ENCODE measurements at regions of chr10 and their contacts with region 1.

Region 1: DNA sequence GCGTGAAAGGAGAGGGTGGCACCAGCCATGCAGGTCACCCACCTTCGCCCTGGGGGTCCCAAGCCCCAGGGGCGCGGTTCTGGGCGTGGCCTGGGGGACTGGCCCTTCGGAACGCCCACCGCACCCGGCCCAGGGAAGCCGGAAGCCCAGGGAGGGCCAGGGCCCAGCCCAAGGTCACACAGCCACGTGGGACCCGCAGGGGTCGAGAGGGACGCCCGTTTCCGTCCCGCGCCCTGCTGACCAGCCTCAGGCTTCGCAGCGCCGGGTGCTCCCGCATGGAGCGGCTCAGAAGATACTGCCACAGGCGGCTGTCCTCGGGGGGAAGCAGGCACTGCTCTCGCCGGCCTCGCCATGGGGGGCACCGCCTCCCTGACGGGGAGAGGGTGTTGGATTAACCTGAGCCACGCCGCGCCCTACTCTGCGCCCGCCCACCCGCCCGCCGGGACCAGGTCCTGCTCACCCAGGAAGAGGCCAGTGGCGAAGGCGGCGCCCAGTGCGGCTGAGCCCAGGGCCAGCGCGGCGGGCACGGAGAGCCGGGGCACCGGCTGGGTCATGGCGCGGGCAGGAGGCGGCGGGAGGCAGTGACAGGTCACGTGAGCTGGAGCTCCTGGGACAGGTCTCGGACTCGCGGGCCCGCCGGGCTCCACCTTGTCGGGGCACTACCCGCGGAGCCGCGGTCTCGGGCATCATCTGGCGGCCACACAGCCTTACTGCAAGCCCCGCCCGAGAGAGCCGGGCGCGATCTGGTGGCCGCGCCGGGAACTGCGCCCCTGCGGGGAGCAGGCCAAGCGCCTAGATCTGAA is at the start of gene COMTD1:
- DNase-seq: peak; percentile 100
- ATAC-seq: peak; percentile 59
- H3K4me3 ChIP-seq: peak within 1 kb of the TSS; percentile 72
- H3K27ac ChIP-seq: peak within 1 kb of the TSS; percentile 71
- H3K4me1 ChIP-seq: peaks cover 42% of the 10 kb centered on the region
- H3K27me3 ChIP-seq: no peaks in the 10 kb centered on the region
- CTCF ChIP-seq: peak; percentile 100
- total RNA-seq, gene COMTD1: 183 and 214 TPM in 2 replicates

Region 2: GRCh38 chr10:74244097-74244685 is 991.4 kb before region 1 on chr10:
- CTCF ChIA-PET with region 1: interaction called, 6 read pairs
- POLR2A ChIA-PET with region 1: no interaction called
- intact Hi-C with region 1: loop called (anchors 1 kb)
- DNase-seq: peak; percentile 99
- ATAC-seq: peak; percentile 20; the same call in 1 of the 2 replicates
- H3K4me3 ChIP-seq: no peak overlapping the region
- H3K27ac ChIP-seq: no peak overlapping the region
- H3K4me1 ChIP-seq: no peaks in the 10 kb centered on the region
- H3K27me3 ChIP-seq: no peaks in the 10 kb centered on the region
- CTCF ChIP-seq: peak; percentile 100

Region 3: GRCh38 chr10:75187961-75188426 is 47.6 kb before region 1 on chr10:
- CTCF ChIA-PET with region 1: interaction called, 170 read pairs
- POLR2A ChIA-PET with region 1: interaction called, 14 read pairs
- intact Hi-C with region 1: loop called (anchors 1 kb)
- DNase-seq: peak; percentile 99
- ATAC-seq: peak; percentile 64
- H3K4me3 ChIP-seq: no peak overlapping the region
- H3K27ac ChIP-seq: peak overlapping the region; percentile 6
- H3K4me1 ChIP-seq: peaks cover 31% of the 10 kb centered on the region
- H3K27me3 ChIP-seq: no peaks in the 10 kb centered on the region
- CTCF ChIP-seq: peak; percentile 98

Region 4: GRCh38 chr10:75210282-75211006 is 25.1 kb before region 1 on chr10 and contains the start of gene VDAC2:
- CTCF ChIA-PET with region 1: interaction called, 21 read pairs
- POLR2A ChIA-PET with region 1: interaction called, 8 read pairs
- intact Hi-C with region 1: loop called (anchors 1 kb)
- DNase-seq: peak; percentile 99
- ATAC-seq: peak; percentile 88
- H3K4me3 ChIP-seq: peak within 1 kb of the TSS; percentile 72
- H3K27ac ChIP-seq: peak within 1 kb of the TSS; percentile 85
- H3K4me1 ChIP-seq: peaks cover 45% of the 10 kb centered on the region
- H3K27me3 ChIP-seq: no peaks in the 10 kb centered on the region
- CTCF ChIP-seq: no peak
- total RNA-seq, gene VDAC2: 463 and 542 TPM in 2 replicates

Region 5: GRCh38 chr10:75350791-75351190 is 115.2 kb after region 1 on chr10:
- CTCF ChIA-PET with region 1: no interaction called
- POLR2A ChIA-PET with region 1: no interaction called
- intact Hi-C with region 1: no loop called
- DNase-seq: peak; percentile 91
- ATAC-seq: peak; percentile 86
- H3K4me3 ChIP-seq: no peak overlapping the region
- H3K27ac ChIP-seq: no peak overlapping the region
- H3K4me1 ChIP-seq: no peaks in the 10 kb centered on the region
- H3K27me3 ChIP-seq: 0 out of 2 replicates have a peak, but pooled peaks cover 10% of the 10 kb centered on the region
- CTCF ChIP-seq: peak; percentile 38; the same call in 1 of the 2 replicates

Region 6: DNA sequence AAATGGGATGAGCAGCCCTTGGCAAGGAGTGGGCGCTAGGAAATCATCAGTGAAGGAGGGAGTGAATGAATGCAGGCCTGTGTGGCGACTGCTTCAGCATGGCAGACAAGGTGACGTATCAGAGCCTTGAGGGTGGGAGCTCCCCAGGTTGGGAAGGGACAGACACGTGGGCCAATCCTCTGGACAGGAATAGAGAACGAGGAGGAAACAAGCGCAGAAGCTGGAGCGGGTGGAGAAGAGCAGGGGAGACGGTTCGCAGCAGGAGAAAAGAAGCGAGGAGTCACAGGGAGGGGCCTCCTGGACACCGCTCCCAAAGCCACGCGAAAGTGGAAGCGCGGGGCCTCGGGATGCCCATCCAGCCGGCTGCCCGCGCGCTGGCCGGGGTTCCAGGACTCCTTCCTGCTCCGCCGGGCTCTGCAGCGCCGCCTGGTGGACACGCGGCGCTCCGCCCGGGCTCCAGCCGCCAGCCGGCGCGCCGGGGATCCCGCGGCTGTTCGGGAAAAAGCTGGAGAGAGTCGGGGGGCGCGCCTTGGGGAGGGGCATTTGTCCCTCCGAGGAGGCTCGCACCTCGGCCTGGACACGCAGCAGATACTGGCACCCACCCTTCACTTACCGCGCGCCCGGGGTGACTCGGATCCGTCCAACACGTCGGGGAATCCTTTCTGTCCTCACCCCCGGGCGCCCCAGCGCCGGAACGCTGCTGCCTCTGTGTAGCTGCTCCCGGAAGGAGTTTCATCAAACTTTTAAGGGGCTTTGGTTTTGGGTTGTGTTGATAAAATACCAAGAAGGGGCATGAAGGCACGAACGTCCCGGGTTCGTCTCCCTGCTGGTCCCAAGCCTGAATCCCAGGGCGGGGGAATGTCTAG is 159.7 kb after region 1 on chr10:
- CTCF ChIA-PET with region 1: interaction called, 5 read pairs
- POLR2A ChIA-PET with region 1: interaction called, 3 read pairs
- intact Hi-C with region 1: loop called (anchors 2 kb)
- DNase-seq: peak; percentile 93
- ATAC-seq: peak; percentile 14
- H3K4me3 ChIP-seq: peak overlapping the region; percentile 79
- H3K27ac ChIP-seq: peak overlapping the region; percentile 45
- H3K4me1 ChIP-seq: peaks cover 6% of the 10 kb centered on the region; the same call in 1 of the 2 replicates
- H3K27me3 ChIP-seq: peaks cover 61% of the 10 kb centered on the region
- CTCF ChIP-seq: peak; percentile 100

Region 7: GRCh38 chr10:75593692-75594556 is 358.3 kb after region 1 on chr10:
- CTCF ChIA-PET with region 1: no interaction called
- POLR2A ChIA-PET with region 1: no interaction called
- intact Hi-C with region 1: no loop called
- DNase-seq: no peak
- ATAC-seq: no peak; the same call in 1 of the 2 replicates
- H3K4me3 ChIP-seq: no peak overlapping the region
- H3K27ac ChIP-seq: no peak overlapping the region
- H3K4me1 ChIP-seq: no peaks in the 10 kb centered on the region
- H3K27me3 ChIP-seq: peaks cover 47% of the 10 kb centered on the region
- CTCF ChIP-seq: peak; percentile 89